A549 (cell line): ENCODE measurements at regions of chr18 and their contacts with region 1.

Region 1: GRCh38 chr18:48951448-48952286 is 902 bp upstream of the SMAD7 start:
- DNase-seq: peak in 1 of 2 experiments; percentile 86
- ATAC-seq: peak; percentile 55 to 60
- H3K4me3 ChIP-seq: peak overlapping the region; percentile 80
- H3K27ac ChIP-seq: peak overlapping the region; percentile 97 to 99
- H3K4me1 ChIP-seq: peaks cover 30% of the 10 kb centered on the region
- CTCF ChIP-seq: no peak
- EP300 ChIP-seq: peak in 1 of 2 experiments; percentile 51; a peak in 1 of 5 replicates
- POLR2A ChIP-seq: peak; percentile 72
- RAD21 ChIP-seq: 0 out of 5 replicates have a peak, but pooled peaks of 1 of the 2 experiments have one; percentile 21

Region 2: DNA sequence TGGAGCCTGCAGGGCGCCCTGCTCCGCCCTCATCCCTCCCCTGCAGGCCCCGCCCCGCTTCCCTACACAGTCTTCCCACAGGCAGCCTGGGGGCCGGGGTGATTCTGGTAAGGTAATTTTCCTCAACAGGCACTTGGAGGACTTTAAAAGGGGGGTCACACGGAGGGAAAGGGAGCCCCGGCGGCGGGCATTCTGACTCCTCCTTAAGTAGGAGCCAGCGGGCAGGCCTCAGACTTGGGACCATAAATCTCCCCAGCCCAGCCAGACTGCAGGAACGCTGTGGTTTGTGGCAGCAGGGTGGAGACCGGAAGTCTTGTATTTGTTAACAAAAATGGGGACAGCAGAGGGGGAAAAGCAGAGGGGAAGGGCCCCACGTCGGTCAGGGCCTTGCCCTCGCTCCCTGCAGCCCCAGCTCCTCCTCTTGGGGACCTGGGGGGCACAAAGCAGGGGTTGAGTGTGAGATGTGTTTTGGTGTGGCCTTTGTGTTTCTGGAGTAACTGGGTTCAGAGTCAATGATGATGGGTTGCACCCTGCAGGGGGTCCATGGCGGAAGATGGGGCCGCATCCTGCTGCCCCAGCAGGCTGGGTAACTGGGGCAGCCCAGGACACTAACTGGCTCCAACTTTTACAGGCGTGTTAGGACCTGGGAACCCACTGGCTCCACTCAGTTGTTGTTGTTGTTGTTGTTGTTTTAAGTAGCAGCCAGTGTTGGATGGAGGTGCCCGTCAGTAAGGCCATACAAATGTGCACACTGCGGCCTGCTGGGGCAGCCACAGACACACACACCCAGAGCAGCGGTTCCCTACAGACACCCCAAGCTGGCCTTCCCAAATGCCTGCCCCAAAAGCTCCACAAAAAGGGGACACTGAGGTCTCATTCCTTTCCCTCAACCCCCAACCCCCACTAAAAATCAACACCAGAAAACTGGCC is 28.6 kb before region 1 on chr18:
- CTCF ChIA-PET with region 1: interaction called, 15 read pairs
- POLR2A ChIA-PET with region 1: interaction called, 13 read pairs
- DNase-seq: no peak
- ATAC-seq: peak; percentile 33 to 40; a peak in 3 of 6 replicates
- H3K4me3 ChIP-seq: peak overlapping the region; percentile 20; the same call in 2 of the 3 replicates
- H3K27ac ChIP-seq: peak overlapping the region; percentile 84 to 99
- H3K4me1 ChIP-seq: peaks cover 99% of the 10 kb centered on the region
- CTCF ChIP-seq: no peak
- EP300 ChIP-seq: no peak
- POLR2A ChIP-seq: no peak
- RAD21 ChIP-seq: no peak

Region 3: DNA sequence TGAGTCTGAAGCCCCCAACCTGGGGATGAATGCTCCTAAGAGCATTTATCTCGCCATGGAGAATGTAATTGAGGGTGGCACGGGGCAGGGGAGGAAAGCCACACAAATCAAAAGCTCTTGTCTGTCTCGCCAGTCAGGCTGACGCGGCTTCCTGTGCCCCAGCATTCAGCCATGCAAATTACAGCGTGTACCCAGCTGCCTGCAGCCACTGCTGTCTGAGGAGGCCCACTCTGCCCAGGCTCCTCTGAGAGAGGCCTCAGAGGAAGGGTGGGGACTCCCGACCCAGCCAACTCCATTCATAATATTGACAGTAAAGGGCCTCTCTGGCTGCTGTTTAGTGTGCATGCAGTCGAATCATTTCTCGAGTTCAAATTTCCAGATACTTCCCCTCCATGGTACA is 22.9 kb before region 1 on chr18:
- CTCF ChIA-PET with region 1: interaction called, 15 read pairs
- POLR2A ChIA-PET with region 1: interaction called, 13 read pairs
- DNase-seq: no peak
- ATAC-seq: no peak
- H3K4me3 ChIP-seq: 0 out of 3 replicates have a peak overlapping the region, but pooled peaks have one; percentile 14
- H3K27ac ChIP-seq: peak overlapping the region; percentile 94 to 99
- H3K4me1 ChIP-seq: peaks cover 96% of the 10 kb centered on the region
- CTCF ChIP-seq: no peak
- EP300 ChIP-seq: no peak
- POLR2A ChIP-seq: no peak
- RAD21 ChIP-seq: no peak

Region 4: GRCh38 chr18:48934723-48935432 is 16.8 kb before region 1 on chr18:
- CTCF ChIA-PET with region 1: interaction called, 11 read pairs
- POLR2A ChIA-PET with region 1: interaction called, 11 read pairs
- DNase-seq: no peak
- ATAC-seq: no peak
- H3K4me3 ChIP-seq: no peak overlapping the region
- H3K27ac ChIP-seq: peak overlapping the region; percentile 94 to 99
- H3K4me1 ChIP-seq: peaks cover 96% of the 10 kb centered on the region
- CTCF ChIP-seq: no peak
- EP300 ChIP-seq: no peak
- POLR2A ChIP-seq: no peak
- RAD21 ChIP-seq: no peak

Region 5: GRCh38 chr18:48974304-48975119 is 22.8 kb after region 1 on chr18:
- CTCF ChIA-PET with region 1: no interaction called
- POLR2A ChIA-PET with region 1: interaction called, 10 read pairs
- DNase-seq: no peak
- ATAC-seq: peak in 1 of 2 experiments; percentile 39; a peak in 2 of 6 replicates
- H3K4me3 ChIP-seq: peak overlapping the region; percentile 71; the same call in 2 of the 3 replicates
- H3K27ac ChIP-seq: peak overlapping the region; percentile 96 to 99
- H3K4me1 ChIP-seq: peaks cover 15% of the 10 kb centered on the region
- CTCF ChIP-seq: no peak
- EP300 ChIP-seq: no peak
- POLR2A ChIP-seq: no peak
- RAD21 ChIP-seq: no peak

Region 6: DNA sequence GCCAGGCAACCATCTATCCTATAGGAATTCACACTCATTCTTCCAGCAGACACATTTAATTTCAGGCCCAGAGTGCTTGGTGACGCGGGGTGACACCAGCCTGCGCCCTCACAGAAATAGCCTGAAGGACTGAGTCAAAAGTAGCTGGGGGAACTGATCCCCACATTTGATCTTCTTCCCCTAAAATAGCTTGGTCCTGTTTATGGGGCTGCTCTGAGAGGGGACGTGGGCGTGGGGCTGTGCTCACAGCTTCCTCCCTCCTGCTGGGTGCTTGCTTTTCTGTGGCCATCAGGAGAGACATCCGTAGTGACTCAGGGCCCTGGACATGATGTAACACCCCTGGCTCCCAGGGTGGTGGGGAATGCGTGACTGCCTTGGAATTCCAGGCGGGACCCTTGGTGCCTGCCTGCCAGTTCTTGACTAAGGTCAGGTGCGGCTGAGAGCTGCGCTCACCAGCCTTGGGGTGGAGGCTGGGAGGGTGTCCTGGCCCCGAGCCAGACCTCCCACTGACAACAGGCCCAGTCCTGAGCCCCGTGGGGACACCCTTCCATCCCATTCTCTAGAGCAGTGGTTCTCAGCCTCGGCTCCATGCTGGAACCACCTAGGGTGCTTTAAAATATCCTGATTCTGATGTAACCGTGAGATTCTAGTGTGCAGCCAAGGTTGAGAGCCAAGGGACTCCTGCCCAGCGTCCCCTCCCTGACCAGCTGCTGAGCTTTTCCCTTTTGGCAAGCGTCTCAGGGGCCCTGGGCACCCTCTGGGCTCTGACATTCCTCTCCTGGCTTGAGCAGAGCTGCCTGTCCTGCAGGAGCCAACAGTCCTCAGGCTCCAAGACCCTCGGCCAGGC is 46.5 kb after region 1 on chr18:
- CTCF ChIA-PET with region 1: no interaction called
- POLR2A ChIA-PET with region 1: interaction called, 27 read pairs
- DNase-seq: peak; percentile 91 to 96
- ATAC-seq: peak; percentile 82 to 91
- H3K4me3 ChIP-seq: 0 out of 3 replicates have a peak overlapping the region, but pooled peaks have one; percentile 30
- H3K27ac ChIP-seq: peak overlapping the region; percentile 91 to 100
- H3K4me1 ChIP-seq: peaks cover 55% of the 10 kb centered on the region
- CTCF ChIP-seq: no peak
- EP300 ChIP-seq: peak; percentile 95 to 97
- POLR2A ChIP-seq: no peak
- RAD21 ChIP-seq: peak; percentile 22 to 63; a peak in 3 of 5 replicates

Region 7: DNA sequence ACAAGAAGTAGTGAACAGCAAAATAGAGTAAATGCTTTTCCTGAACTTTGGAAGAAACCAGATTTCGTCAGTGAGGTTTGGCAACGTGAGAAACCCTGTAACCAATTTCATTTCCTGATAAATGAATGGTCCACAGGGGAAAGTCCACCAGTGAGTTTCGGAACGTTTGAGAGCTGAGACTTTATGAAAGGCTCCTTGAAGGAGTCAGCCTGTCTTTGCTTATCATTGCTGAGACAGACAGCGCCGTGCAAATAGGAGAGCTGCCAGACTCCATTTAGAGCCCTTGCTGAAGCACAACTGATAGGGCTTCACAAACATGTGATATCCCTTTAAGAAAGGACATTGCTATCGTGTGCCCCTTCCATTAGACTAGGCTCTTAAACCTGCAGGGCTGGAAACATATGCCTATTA is 120.9 kb after region 1 on chr18:
- CTCF ChIA-PET with region 1: no interaction called
- POLR2A ChIA-PET with region 1: no interaction called
- DNase-seq: no peak
- ATAC-seq: no peak
- H3K4me3 ChIP-seq: no peak overlapping the region
- H3K27ac ChIP-seq: no peak overlapping the region
- H3K4me1 ChIP-seq: 0 out of 3 replicates have a peak, but pooled peaks cover 9% of the 10 kb centered on the region
- CTCF ChIP-seq: no peak
- EP300 ChIP-seq: no peak
- POLR2A ChIP-seq: no peak
- RAD21 ChIP-seq: no peak